Mammary epithelial cell (primary cell): ENCODE measurements at regions of chr22 and their contacts with region 1.

Region 1: DNA sequence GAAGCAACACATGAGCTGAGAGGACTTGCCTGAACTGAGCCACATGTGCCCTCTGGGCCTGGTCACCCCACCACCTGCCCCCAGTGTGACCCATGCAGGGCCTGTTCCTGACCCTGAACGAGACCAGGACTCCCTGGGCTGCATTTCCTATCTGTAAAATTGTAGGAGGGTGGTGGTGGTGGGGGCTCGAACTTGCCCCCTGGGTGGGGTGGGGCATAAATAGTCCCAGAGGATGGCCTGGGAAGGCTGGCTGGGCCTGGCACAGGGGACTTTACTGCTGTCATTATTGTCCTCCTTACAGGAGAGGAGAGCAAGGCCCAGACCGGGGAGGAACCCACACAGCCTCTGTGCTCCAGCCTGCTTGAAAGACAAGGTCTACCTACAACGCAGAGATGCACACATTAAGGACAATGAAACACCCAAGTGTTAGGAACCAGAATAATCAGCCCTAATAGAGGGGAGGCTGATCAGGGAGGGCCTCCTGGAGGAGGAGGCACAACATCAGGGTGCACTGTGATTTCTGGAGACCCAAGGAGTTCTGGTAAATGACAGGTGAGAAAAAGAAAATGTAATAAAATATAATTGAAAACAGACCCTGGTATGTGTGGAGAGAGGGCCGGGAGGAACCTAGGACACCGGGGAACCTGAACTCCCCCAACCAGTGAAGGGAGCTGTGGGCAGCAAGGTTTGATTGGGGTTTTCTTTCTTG is 2.8 kb upstream of the AIFM3 start:
- DNase-seq: no peak
- H3K4me3 ChIP-seq: no peak overlapping the region
- H3K27ac ChIP-seq: no peak overlapping the region
- H3K4me1 ChIP-seq: peaks cover 2% of the 10 kb centered on the region
- H3K27me3 ChIP-seq: peaks cover 2% of the 10 kb centered on the region
- CTCF ChIP-seq: no peak

Region 2: DNA sequence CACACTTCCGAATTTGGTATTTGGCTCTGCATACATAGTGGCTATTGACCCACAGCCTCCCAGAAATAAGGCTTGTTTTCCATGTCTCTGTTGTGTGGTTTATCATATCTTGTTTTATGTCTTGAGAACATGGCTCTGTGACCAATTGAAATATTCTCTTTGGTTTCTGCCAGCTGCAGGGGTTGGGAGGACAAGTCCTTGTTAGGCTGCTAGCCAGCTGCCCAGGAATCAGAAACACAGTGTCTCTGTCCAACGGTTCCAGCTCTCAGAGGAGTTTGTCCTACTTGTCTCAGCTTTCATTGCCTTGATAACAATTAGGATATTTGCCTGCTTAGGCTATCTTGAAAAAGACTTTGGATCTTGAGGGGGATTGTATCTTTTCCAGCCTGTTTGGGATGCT is 74.2 kb after region 1 on chr22:
- CTCF ChIA-PET with region 1: no interaction called
- dilution Hi-C with region 1: loop called (anchors 5 kb)
- in situ Hi-C with region 1: no loop called
- intact Hi-C with region 1: no loop called
- DNase-seq: no peak
- H3K4me3 ChIP-seq: no peak overlapping the region
- H3K27ac ChIP-seq: no peak overlapping the region
- H3K4me1 ChIP-seq: peaks cover 13% of the 10 kb centered on the region
- H3K27me3 ChIP-seq: no peaks in the 10 kb centered on the region
- CTCF ChIP-seq: no peak